HepG2 (cell line): ENCODE measurements at regions of chr17 and their contacts with region 1.

Region 1: DNA sequence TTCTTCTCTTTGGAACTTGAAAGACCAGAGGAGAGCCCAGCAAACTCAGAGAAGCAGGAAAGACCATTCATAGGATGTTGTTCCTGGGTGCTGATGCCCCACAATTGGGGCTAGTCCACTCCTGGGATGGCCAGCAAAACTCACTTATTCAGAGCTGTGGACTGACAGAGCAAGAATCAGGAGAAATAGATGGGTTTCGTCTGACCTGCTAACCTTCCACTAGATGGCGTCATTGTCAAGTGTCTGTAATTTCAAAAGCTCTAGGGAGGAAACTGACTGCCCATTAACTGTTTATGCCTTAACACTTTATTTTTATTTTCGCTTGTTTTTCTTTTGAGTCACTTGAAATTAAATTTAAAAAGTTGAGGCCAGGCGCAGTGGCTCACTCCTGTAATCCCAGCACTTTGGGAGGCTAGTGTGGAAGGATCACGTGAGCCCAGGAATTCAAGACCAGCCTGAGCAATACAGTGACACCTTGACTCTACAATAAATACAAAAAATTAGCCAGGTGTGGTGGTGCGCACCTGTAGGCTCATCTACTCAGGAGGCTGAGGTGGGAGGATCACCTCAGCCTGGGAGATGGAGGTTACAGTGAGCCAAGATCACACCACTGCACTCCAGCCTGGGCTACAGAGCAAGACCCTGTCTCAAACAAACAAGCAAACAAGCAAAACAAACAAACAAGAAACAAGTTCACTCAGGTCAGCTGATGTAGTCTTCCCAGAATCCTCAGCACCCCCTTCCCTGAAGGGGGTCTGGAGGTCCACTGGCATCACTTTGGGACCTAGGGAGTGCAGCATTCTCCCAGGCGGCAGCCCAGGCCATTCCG is 28.6 kb upstream of the MILR1 start:
- DNase-seq: peak; percentile 81
- ATAC-seq: peak; percentile 82
- H3K4me3 ChIP-seq: no peak overlapping the region
- H3K27ac ChIP-seq: no peak overlapping the region
- H3K4me1 ChIP-seq: peaks cover 31% of the 10 kb centered on the region
- H3K27me3 ChIP-seq: no peaks in the 10 kb centered on the region
- CTCF ChIP-seq: peak; percentile 86
- EP300 ChIP-seq: no peak
- POLR2A ChIP-seq: no peak
- RAD21 ChIP-seq: peak; percentile 52

Region 2: DNA sequence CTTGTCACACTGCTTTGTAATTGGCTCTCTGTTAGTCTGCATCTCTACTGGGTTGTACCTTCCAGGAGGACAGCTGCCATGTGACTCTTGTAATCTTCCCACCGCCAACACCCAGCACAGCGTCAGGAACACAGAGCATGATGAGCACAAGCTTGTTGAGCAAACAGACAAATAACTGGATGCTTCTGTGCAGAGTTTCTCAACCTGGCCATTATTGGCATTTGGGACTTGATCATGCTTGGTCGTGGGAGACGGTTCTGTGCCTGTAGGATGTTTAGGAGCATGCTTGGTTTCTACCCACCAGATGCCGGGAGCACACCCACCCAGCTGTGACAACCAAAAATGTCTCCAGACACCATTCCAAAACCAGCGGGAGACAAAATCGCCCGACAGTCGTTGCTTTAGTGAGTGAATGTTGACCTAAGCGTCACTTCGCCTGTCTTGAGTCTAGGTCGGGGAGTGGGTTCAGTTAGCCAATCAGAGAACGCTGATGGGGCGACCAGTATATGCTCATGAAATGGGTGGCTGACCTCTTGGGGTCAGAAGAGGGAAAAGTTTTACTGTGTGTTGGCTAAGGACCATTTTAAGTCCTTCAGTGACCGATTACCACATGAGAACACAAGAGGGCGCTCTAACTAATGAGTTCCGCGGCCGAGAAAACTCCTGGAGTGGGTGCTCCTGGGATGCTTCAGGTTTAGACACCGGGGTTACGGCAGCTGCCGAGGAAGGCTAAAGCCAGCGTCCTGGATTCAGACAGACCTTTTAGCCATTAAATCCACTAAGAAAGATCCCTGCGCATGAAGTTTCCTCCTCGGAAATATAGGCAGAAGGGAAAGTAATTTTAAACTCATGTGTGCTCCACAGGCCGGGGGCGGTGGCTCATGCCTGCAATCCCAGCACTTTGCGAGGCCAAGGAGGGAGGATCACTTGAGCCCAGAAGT is 99.5 kb before region 1 on chr17:
- CTCF ChIA-PET with region 1: interaction called, 42 read pairs
- POLR2A ChIA-PET with region 1: interaction called, 5 read pairs
- in situ Hi-C with region 1: no loop called
- intact Hi-C with region 1: loop called (anchors 1 kb)
- DNase-seq: peak; percentile 79
- ATAC-seq: peak; percentile 72
- H3K4me3 ChIP-seq: no peak overlapping the region
- H3K27ac ChIP-seq: no peak overlapping the region
- H3K4me1 ChIP-seq: peaks cover 76% of the 10 kb centered on the region
- H3K27me3 ChIP-seq: no peaks in the 10 kb centered on the region
- CTCF ChIP-seq: peak; percentile 91
- EP300 ChIP-seq: no peak
- POLR2A ChIP-seq: no peak
- RAD21 ChIP-seq: peak; percentile 80

Region 3: DNA sequence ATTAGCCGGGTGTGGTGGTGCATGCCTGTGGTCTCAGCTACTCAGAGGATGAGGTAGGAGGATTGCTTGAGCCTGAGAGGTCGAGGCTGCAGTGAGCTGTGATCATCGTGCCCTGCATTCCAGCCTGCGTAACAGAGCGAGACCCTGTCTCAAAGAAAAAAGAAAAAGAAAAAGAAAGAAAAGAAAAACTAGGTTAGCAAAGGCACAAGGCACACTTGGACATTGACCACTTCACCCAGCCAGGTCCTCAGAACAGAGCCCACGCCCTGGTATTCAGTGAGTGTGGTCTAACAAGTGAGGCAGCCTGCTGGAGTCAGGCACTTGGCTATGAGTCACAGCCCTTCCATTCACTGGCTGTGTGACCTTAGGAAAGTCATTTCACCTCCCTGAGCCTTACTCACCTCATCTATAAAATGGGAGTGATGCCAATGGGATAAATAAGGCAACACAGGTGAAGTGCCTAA is 39.0 kb after region 1 on chr17:
- CTCF ChIA-PET with region 1: no interaction called
- POLR2A ChIA-PET with region 1: no interaction called
- in situ Hi-C with region 1: no loop called
- intact Hi-C with region 1: no loop called
- DNase-seq: no peak
- ATAC-seq: peak; percentile 43; the same call in 2 of the 3 replicates
- H3K4me3 ChIP-seq: no peak overlapping the region
- H3K27ac ChIP-seq: no peak overlapping the region
- H3K4me1 ChIP-seq: peaks cover 7% of the 10 kb centered on the region; the same call in 1 of the 2 replicates
- H3K27me3 ChIP-seq: peaks cover 0 to 11% of the 10 kb centered on the region in 2 experiments; a peak in 3 of 5 replicates
- CTCF ChIP-seq: no peak
- EP300 ChIP-seq: no peak
- POLR2A ChIP-seq: no peak
- RAD21 ChIP-seq: no peak

Region 4: GRCh38 chr17:64496786-64497564 is 76.6 kb after region 1 on chr17 and contains the start of gene POLG2:
- CTCF ChIA-PET with region 1: interaction called, 57 read pairs
- POLR2A ChIA-PET with region 1: interaction called, 12 read pairs
- in situ Hi-C with region 1: loop called (anchors 5 kb)
- intact Hi-C with region 1: no loop called
- DNase-seq: peak; percentile 92
- ATAC-seq: peak; percentile 86
- H3K4me3 ChIP-seq: peak within 1 kb of the TSS; percentile 65 to 90 (median 68)
- H3K27ac ChIP-seq: peak within 1 kb of the TSS; percentile 74
- H3K4me1 ChIP-seq: peaks cover 73% of the 10 kb centered on the region
- H3K27me3 ChIP-seq: no peaks in the 10 kb centered on the region; a peak in 1 of 5 replicates
- CTCF ChIP-seq: peak; percentile 79
- EP300 ChIP-seq: peak in 1 of 2 experiments; percentile 69; a peak in 1 of 4 replicates
- POLR2A ChIP-seq: peak; percentile 90 to 98
- RAD21 ChIP-seq: peak; percentile 59
- total RNA-seq, gene POLG2: 16.2 and 25.5 TPM in 2 replicates

Region 5: GRCh38 chr17:64648234-64648633 is 227.9 kb after region 1 on chr17:
- CTCF ChIA-PET with region 1: interaction called, 10 read pairs
- POLR2A ChIA-PET with region 1: no interaction called
- in situ Hi-C with region 1: no loop called
- intact Hi-C with region 1: loop called (anchors 1 kb)
- DNase-seq: no peak
- ATAC-seq: no peak
- H3K4me3 ChIP-seq: no peak overlapping the region
- H3K27ac ChIP-seq: no peak overlapping the region
- H3K4me1 ChIP-seq: peaks cover 14% of the 10 kb centered on the region
- H3K27me3 ChIP-seq: no peaks in the 10 kb centered on the region
- CTCF ChIP-seq: no peak
- EP300 ChIP-seq: no peak
- POLR2A ChIP-seq: no peak
- RAD21 ChIP-seq: no peak

Region 6: GRCh38 chr17:64736804-64737492 is 316.6 kb after region 1 on chr17:
- CTCF ChIA-PET with region 1: no interaction called
- POLR2A ChIA-PET with region 1: no interaction called
- in situ Hi-C with region 1: no loop called
- intact Hi-C with region 1: loop called (anchors 2 kb)
- DNase-seq: peak; percentile 51
- ATAC-seq: peak; percentile 57
- H3K4me3 ChIP-seq: no peak overlapping the region
- H3K27ac ChIP-seq: no peak overlapping the region
- H3K4me1 ChIP-seq: peaks cover 45% of the 10 kb centered on the region
- H3K27me3 ChIP-seq: no peaks in the 10 kb centered on the region
- CTCF ChIP-seq: peak; percentile 58
- EP300 ChIP-seq: no peak
- POLR2A ChIP-seq: no peak
- RAD21 ChIP-seq: peak; percentile 78